Naive thymus-derived CD4-positive, alpha-beta T cell (primary cell): ENCODE measurements at regions of chr15 and their contacts with region 1.

Region 1: GRCh38 chr15:90362936-90363212 is 10.8 kb downstream of the ZNF774 start:
- DNase-seq: no peak
- ATAC-seq: no peak
- H3K4me3 ChIP-seq: no peak overlapping the region
- H3K4me3 Mint-ChIP-seq: peak overlapping the region in 1 of 10 donors; percentile 44
- H3K27ac ChIP-seq: no peak overlapping the region
- H3K27ac Mint-ChIP-seq: no peak overlapping the region
- H3K4me1 ChIP-seq: peaks cover 6 to 13% of the 10 kb centered on the region in 2 donors
- H3K4me1 Mint-ChIP-seq: peaks cover 11 to 35% (median 34%) of the 10 kb centered on the region in 7 donors
- H3K27me3 ChIP-seq: no peaks in the 10 kb centered on the region
- H3K27me3 Mint-ChIP-seq: no peaks in the 10 kb centered on the region

Region 2: GRCh38 chr15:90376789-90377188 is 13.9 kb after region 1 on chr15:
- CTCF ChIA-PET with region 1: interaction called, 8 read pairs
- POLR2A ChIA-PET with region 1: interaction called, 9 read pairs
- intact Hi-C with region 1: loop called in 1 of 2 experiments (anchors 1 kb)
- DNase-seq: peak in 8 of 9 donors; percentile 58 to 81 (median 74)
- ATAC-seq: peak; percentile 98
- H3K4me3 ChIP-seq: peak overlapping the region; percentile 11
- H3K4me3 Mint-ChIP-seq: peak overlapping the region; percentile 66 to 87 (median 72)
- H3K27ac ChIP-seq: no peak overlapping the region
- H3K27ac Mint-ChIP-seq: peak overlapping the region; percentile 7 to 92 (median 56)
- H3K4me1 ChIP-seq: peaks cover 32 to 35% of the 10 kb centered on the region in 2 donors
- H3K4me1 Mint-ChIP-seq: peaks cover 24 to 59% (median 48%) of the 10 kb centered on the region in 7 donors
- H3K27me3 ChIP-seq: no peaks in the 10 kb centered on the region
- H3K27me3 Mint-ChIP-seq: no peaks in the 10 kb centered on the region

Region 3: DNA sequence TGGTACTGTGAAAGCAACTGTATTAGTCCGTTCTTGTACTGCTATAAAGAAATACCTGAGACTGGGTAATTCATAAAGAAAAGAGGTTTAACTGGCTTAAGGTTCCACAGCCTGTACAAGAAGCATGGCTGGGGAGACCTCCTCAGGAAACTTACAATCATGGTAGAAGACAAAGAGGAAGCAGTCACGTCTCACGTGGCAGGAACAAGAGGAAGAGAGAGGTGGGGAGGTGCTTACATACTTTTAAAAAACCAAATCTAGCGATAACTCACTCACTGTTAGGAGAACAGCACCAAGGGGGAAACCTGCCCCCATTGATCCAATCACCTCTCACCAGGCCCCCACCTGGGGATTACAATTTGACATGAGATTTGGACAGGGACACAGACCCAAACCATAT is 74.1 kb after region 1 on chr15:
- CTCF ChIA-PET with region 1: no interaction called
- POLR2A ChIA-PET with region 1: no interaction called
- intact Hi-C with region 1: loop called (anchors 5 kb)
- DNase-seq: no peak
- ATAC-seq: no peak
- H3K4me3 ChIP-seq: no peak overlapping the region
- H3K4me3 Mint-ChIP-seq: no peak overlapping the region
- H3K27ac ChIP-seq: no peak overlapping the region
- H3K27ac Mint-ChIP-seq: peak overlapping the region in 3 of 9 donors; percentile 4 to 45 (median 25)
- H3K4me1 ChIP-seq: peaks cover 0 to 6% of the 10 kb centered on the region in 2 donors
- H3K4me1 Mint-ChIP-seq: peaks cover 10 to 42% (median 28%) of the 10 kb centered on the region in 7 donors
- H3K27me3 ChIP-seq: no peaks in the 10 kb centered on the region
- H3K27me3 Mint-ChIP-seq: no peaks in the 10 kb centered on the region

Region 4: GRCh38 chr15:90451053-90451850 is 88.4 kb after region 1 on chr15:
- CTCF ChIA-PET with region 1: interaction called, 13 read pairs
- POLR2A ChIA-PET with region 1: interaction called, 5 read pairs
- intact Hi-C with region 1: no loop called
- DNase-seq: no peak
- ATAC-seq: no peak
- H3K4me3 ChIP-seq: no peak overlapping the region
- H3K4me3 Mint-ChIP-seq: no peak overlapping the region
- H3K27ac ChIP-seq: no peak overlapping the region
- H3K27ac Mint-ChIP-seq: peak overlapping the region in 1 of 9 donors; percentile 27
- H3K4me1 ChIP-seq: no peaks in the 10 kb centered on the region
- H3K4me1 Mint-ChIP-seq: peaks cover 0 to 4% (median 0%) of the 10 kb centered on the region in 7 donors
- H3K27me3 ChIP-seq: no peaks in the 10 kb centered on the region
- H3K27me3 Mint-ChIP-seq: no peaks in the 10 kb centered on the region

Region 5: DNA sequence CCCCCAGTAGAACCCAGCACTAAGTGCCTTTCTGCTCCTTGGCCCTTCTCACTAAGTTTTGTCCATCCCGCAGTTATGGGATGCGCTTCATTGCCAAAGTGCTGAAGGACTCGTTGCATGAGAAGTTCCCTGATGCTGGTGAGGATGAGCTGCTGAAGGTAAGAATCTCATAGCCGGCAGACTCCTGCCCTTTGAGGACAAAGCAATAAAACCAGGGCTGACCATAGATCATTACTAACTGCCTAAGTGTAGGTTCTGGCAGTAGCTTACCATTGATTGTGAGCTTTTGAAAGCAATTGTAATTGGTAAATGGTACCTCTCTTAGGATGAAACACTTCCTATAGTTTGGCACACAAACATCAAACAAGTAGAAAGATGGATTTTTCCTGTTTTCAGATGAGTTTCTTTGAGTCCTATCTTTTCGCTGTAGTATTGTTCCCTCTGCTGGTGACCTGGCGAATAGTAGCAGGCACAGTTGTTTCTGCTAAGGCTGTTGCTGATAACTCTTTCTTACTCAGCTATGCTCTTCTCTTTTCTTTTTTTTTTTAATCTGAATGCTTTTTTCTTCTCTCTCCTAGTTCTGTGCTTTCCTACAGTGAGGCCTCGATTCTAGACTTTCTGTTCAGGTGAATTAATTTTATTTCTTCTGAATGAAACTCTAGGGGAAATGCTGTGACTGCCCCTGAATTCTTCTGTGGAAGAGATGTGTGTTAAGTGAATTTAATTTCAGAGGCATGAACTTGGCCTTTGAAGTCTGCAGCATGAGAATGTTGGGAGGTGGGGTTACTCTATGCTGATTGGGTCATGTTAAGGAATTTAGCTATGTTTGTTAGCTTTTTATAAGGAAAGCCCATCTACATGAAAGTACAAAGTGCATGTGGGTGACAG is 119.5 kb after region 1 on chr15:
- CTCF ChIA-PET with region 1: interaction called, 79 read pairs
- POLR2A ChIA-PET with region 1: interaction called, 7 read pairs
- intact Hi-C with region 1: loop called (anchors 1 kb)
- DNase-seq: peak in 7 of 9 donors; percentile 28 to 60 (median 47)
- ATAC-seq: peak; percentile 61
- H3K4me3 ChIP-seq: no peak overlapping the region
- H3K4me3 Mint-ChIP-seq: no peak overlapping the region
- H3K27ac ChIP-seq: no peak overlapping the region
- H3K27ac Mint-ChIP-seq: peak overlapping the region in 4 of 9 donors; percentile 9 to 50 (median 32)
- H3K4me1 ChIP-seq: peaks cover 10 to 11% of the 10 kb centered on the region in 2 donors
- H3K4me1 Mint-ChIP-seq: peaks cover 9 to 44% (median 40%) of the 10 kb centered on the region in 7 donors
- H3K27me3 ChIP-seq: no peaks in the 10 kb centered on the region
- H3K27me3 Mint-ChIP-seq: no peaks in the 10 kb centered on the region